CD4-positive, alpha-beta T cell (primary cell): ENCODE measurements at regions of chr11 and their contacts with region 1.

Region 1: DNA sequence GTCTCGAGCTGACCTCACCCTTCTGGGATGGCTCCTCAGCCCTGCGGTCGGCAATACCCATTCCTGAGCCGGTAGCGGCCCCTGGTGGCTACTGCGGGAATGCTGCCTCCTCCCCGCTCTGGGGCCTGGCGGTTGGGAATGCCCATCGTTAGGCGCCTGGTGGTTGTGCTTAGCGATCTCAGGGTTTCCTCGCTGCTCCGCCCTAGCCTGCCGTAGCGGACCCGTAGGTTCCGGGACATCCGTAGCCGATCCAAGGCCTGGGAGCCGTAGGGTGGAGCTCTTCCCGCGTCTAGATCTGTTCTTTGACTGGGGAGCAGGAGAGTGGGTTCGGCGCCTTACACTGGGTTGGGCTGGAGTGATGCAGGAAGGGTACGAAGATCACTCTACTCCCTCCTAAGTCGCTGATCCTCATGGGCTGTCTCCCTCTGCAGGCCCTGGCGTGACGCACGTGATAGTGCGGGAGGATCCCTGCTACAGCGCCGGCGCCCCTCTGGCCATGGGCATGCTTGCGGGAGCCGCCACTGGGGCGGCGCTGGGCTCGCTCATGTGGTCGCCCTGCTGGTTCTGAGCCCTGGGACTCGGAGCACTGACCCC is 14.8 kb downstream of the PLEKHB1 start:
- DNase-seq: peak; percentile 69 to 91 (median 83)
- ATAC-seq: peak; percentile 98
- H3K4me3 ChIP-seq: peak overlapping the region; percentile 34
- H3K4me3 Mint-ChIP-seq: no peak overlapping the region
- H3K27ac ChIP-seq: no peak overlapping the region
- H3K27ac Mint-ChIP-seq: no peak overlapping the region
- H3K4me1 ChIP-seq: peaks cover 21% of the 10 kb centered on the region
- H3K4me1 Mint-ChIP-seq: peaks cover 32% of the 10 kb centered on the region
- H3K27me3 ChIP-seq: no peaks in the 10 kb centered on the region
- H3K27me3 Mint-ChIP-seq: no peaks in the 10 kb centered on the region
- CTCF ChIP-seq: peak; percentile 96

Region 2: GRCh38 chr11:73307323-73308002 is 353.7 kb before region 1 on chr11:
- CTCF ChIA-PET with region 1: no interaction called
- POLR2A ChIA-PET with region 1: interaction called, 3 read pairs
- intact Hi-C with region 1: loop called in 1 of 2 experiments (anchors 5 kb)
- DNase-seq: peak; percentile 82 to 96 (median 86)
- ATAC-seq: peak; percentile 78
- H3K4me3 ChIP-seq: peak overlapping the region; percentile 70
- H3K4me3 Mint-ChIP-seq: peak overlapping the region; percentile 92
- H3K27ac ChIP-seq: no peak overlapping the region
- H3K27ac Mint-ChIP-seq: no peak overlapping the region
- H3K4me1 ChIP-seq: peaks cover 24% of the 10 kb centered on the region
- H3K4me1 Mint-ChIP-seq: peaks cover 10% of the 10 kb centered on the region
- H3K27me3 ChIP-seq: peaks cover 23% of the 10 kb centered on the region in 2 experiments
- H3K27me3 Mint-ChIP-seq: peaks cover 41% of the 10 kb centered on the region
- CTCF ChIP-seq: peak; percentile 65

Region 3: DNA sequence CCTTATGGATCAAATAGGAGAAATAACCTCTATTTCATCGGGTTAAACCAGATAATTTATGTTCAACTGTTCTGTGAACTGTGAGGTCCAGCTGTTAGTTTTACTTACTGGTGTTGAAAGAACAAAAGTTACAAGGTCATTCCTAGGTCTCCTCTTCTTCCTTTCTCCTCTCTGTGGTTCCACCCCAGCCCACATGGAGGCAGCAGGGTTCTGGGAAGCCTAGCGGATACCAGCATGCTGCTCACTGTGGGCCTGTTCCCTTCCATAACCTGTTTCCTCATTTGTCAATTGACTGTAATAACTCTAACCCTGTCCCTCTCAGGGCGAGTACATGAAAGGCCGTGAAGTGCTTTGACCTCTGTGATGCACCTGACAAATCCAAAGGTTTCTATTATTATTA is 257.1 kb before region 1 on chr11:
- CTCF ChIA-PET with region 1: no interaction called
- POLR2A ChIA-PET with region 1: interaction called, 3 read pairs
- intact Hi-C with region 1: loop called (anchors 2 to 5 kb)
- DNase-seq: peak in 2 of 14 experiments; percentile 46 to 48
- ATAC-seq: no peak
- H3K4me3 ChIP-seq: no peak overlapping the region
- H3K4me3 Mint-ChIP-seq: no peak overlapping the region
- H3K27ac ChIP-seq: no peak overlapping the region
- H3K27ac Mint-ChIP-seq: no peak overlapping the region
- H3K4me1 ChIP-seq: no peaks in the 10 kb centered on the region
- H3K4me1 Mint-ChIP-seq: no peaks in the 10 kb centered on the region
- H3K27me3 ChIP-seq: no peaks in the 10 kb centered on the region
- H3K27me3 Mint-ChIP-seq: no peaks in the 10 kb centered on the region
- CTCF ChIP-seq: no peak

Region 4: DNA sequence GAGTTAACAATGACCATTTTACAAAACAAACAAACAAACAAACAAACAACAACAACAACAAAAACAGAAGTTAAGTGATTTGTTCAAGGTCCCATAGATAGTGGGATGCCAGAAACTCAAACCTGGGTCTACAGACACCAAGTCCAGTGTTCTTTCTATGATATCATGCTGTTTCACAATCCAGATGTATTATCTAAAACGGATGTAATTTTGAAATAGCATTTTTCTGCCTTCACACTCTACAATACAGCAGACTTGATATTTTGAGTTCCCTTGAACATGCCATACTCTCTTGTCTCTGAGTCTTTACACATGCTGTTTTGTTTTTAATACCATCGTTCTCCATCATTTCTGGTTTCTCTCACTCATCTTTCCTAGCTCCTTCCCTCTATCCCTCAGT is 180.5 kb before region 1 on chr11:
- CTCF ChIA-PET with region 1: no interaction called
- POLR2A ChIA-PET with region 1: no interaction called
- intact Hi-C with region 1: loop called in 1 of 2 experiments (anchors 10 kb)
- DNase-seq: no peak
- ATAC-seq: no peak
- H3K4me3 ChIP-seq: no peak overlapping the region
- H3K4me3 Mint-ChIP-seq: no peak overlapping the region
- H3K27ac ChIP-seq: no peak overlapping the region
- H3K27ac Mint-ChIP-seq: peak overlapping the region; percentile 4
- H3K4me1 ChIP-seq: no peaks in the 10 kb centered on the region
- H3K4me1 Mint-ChIP-seq: peaks cover 6% of the 10 kb centered on the region
- H3K27me3 ChIP-seq: no peaks in the 10 kb centered on the region
- H3K27me3 Mint-ChIP-seq: no peaks in the 10 kb centered on the region
- CTCF ChIP-seq: no peak

Region 5: GRCh38 chr11:73559743-73560142 is 101.4 kb before region 1 on chr11:
- CTCF ChIA-PET with region 1: no interaction called
- POLR2A ChIA-PET with region 1: no interaction called
- intact Hi-C with region 1: no loop called
- DNase-seq: no peak
- ATAC-seq: no peak
- H3K4me3 ChIP-seq: no peak overlapping the region
- H3K4me3 Mint-ChIP-seq: no peak overlapping the region
- H3K27ac ChIP-seq: no peak overlapping the region
- H3K27ac Mint-ChIP-seq: no peak overlapping the region
- H3K4me1 ChIP-seq: no peaks in the 10 kb centered on the region
- H3K4me1 Mint-ChIP-seq: peaks cover 5% of the 10 kb centered on the region
- H3K27me3 ChIP-seq: no peaks in the 10 kb centered on the region
- H3K27me3 Mint-ChIP-seq: no peaks in the 10 kb centered on the region
- CTCF ChIP-seq: no peak

Region 6: DNA sequence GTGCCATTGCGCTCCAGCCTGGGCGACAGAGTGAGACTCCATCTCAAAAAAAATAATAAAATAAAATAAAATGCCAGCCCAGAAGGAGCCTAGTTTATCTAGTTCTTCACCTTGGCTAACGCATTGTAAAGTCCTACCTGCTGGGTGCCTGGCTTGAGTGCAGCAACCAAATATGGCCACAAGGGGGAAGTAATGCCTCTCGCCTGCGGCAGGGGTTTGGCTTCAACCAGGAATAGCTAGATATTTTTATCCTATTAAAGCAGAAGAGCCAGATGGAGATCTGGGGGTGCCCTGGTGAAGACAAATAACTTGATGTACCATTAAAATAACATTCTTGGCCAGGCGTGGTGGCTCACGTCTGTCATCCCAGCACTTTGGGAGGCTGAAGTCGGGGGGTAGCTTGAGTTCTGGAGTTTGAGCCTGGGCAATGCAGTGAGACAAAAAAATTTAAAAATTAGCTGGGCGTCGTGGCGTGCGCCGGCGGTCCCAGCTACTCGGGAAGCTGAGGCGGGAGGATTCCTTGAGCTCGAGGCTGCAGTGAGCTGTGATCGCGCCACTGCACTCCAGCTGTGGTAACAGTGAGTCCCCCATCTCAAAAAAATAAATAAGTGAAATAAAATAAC is 35.3 kb before region 1 on chr11:
- CTCF ChIA-PET with region 1: interaction called, 88 read pairs
- POLR2A ChIA-PET with region 1: interaction called, 30 read pairs
- intact Hi-C with region 1: loop called (anchors 1 kb)
- DNase-seq: peak; percentile 55 to 84 (median 64)
- ATAC-seq: peak; percentile 91
- H3K4me3 ChIP-seq: no peak overlapping the region
- H3K4me3 Mint-ChIP-seq: no peak overlapping the region
- H3K27ac ChIP-seq: no peak overlapping the region
- H3K27ac Mint-ChIP-seq: no peak overlapping the region
- H3K4me1 ChIP-seq: peaks cover 5% of the 10 kb centered on the region
- H3K4me1 Mint-ChIP-seq: no peaks in the 10 kb centered on the region
- H3K27me3 ChIP-seq: peaks cover 3 to 14% of the 10 kb centered on the region in 2 experiments
- H3K27me3 Mint-ChIP-seq: peaks cover 23% of the 10 kb centered on the region
- CTCF ChIP-seq: peak; percentile 89

Region 7: DNA sequence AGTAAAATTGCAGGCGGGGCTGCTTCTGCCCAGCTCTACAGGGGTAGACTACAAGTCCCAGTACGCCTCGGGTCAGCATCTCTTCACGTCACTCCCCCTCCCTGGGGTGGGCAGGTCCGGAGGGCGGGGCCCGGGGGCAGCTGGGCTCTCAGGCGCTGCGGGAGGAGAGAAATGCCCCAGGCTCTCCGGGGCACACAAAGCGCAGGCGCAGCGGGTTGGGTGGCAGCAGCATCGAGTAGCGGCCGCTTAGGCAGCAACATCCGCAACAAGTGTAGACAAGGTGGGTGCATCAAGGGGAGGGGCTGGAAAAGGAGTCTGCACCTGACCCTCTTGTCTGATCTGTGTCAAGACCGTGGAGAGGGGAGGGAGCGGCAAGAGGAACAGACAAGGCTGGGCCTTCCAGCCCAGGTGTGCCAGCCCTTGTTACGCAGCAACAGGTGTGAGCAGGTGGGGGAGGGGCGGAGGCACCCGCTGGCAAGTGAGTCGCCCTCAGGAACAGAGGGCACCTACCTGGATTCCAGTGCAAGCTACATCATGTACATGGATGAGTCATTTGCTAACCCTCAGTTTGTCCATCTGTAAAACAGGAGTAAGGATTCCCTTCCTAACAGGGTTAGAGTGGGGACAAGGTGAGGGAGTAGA is 13.6 kb before region 1 on chr11:
- CTCF ChIA-PET with region 1: interaction called, 12 read pairs
- POLR2A ChIA-PET with region 1: interaction called, 14 read pairs
- intact Hi-C with region 1: no loop called
- DNase-seq: peak; percentile 90 to 97 (median 94)
- ATAC-seq: peak; percentile 96
- H3K4me3 ChIP-seq: peak overlapping the region; percentile 55
- H3K4me3 Mint-ChIP-seq: peak overlapping the region; percentile 90
- H3K27ac ChIP-seq: peak overlapping the region in 1 of 2 donors; percentile 34
- H3K27ac Mint-ChIP-seq: peak overlapping the region; percentile 91
- H3K4me1 ChIP-seq: peaks cover 25% of the 10 kb centered on the region
- H3K4me1 Mint-ChIP-seq: peaks cover 28% of the 10 kb centered on the region
- H3K27me3 ChIP-seq: no peaks in the 10 kb centered on the region
- H3K27me3 Mint-ChIP-seq: no peaks in the 10 kb centered on the region
- CTCF ChIP-seq: no peak